BJ (cell line): ENCODE measurements at regions of chr16 and their contacts with region 1.

Region 1: DNA sequence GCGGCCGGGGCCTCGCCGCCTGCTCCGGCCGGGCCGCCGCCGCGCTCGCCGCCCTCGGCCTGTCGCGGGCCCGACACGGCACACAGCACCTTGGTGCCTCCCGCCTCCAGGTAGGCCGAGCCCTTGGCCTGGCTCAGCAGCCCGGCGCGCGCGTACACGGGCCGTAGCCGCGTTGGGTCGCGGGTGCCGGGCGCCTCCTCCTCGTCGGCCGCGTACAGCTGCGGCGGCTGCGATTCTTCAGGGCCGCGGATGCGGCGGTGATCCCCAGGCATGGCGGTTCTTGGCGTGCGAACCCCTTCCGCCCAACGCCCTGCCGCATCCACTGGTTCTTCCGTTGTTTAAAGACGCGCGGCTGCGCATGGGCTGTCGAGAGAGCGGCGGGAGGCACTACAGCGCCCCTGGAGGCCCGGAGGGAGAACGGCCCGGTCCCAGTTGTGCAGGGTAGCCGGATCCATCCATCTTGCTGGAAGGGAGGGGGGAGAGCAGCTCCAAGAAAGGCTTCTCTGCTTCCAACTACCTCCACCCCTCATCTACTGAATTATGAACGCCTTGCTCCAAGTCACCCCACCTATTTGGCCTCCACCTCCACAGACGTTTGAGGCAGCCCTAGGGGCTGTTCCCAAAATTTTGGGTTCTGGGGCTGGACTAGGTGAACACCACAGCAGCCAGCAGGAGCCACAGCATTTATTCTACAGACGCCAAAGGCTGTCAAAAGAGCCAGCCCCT is at the start of gene EXOSC6:
- DNase-seq: peak; percentile 39
- H3K4me3 ChIP-seq: peak within 1 kb of the TSS; percentile 53
- H3K27me3 ChIP-seq: no peaks in the 10 kb centered on the region
- CTCF ChIP-seq: peak; percentile 92
- polyA plus RNA-seq, gene EXOSC6: 10.6 and 14.9 TPM in 2 replicates

Region 2: GRCh38 chr16:70267516-70267915 is 15.7 kb after region 1 on chr16:
- CTCF ChIA-PET with region 1: interaction called, 46 read pairs
- POLR2A ChIA-PET with region 1: no interaction called
- DNase-seq: no peak
- H3K4me3 ChIP-seq: no peak overlapping the region
- H3K27me3 ChIP-seq: no peaks in the 10 kb centered on the region
- CTCF ChIP-seq: peak; percentile 59

Region 3: GRCh38 chr16:70407811-70408274 is 156.1 kb after region 1 on chr16:
- CTCF ChIA-PET with region 1: no interaction called
- POLR2A ChIA-PET with region 1: interaction called, 15 read pairs
- DNase-seq: no peak
- H3K4me3 ChIP-seq: no peak overlapping the region
- H3K27me3 ChIP-seq: no peaks in the 10 kb centered on the region
- CTCF ChIP-seq: no peak

Region 4: DNA sequence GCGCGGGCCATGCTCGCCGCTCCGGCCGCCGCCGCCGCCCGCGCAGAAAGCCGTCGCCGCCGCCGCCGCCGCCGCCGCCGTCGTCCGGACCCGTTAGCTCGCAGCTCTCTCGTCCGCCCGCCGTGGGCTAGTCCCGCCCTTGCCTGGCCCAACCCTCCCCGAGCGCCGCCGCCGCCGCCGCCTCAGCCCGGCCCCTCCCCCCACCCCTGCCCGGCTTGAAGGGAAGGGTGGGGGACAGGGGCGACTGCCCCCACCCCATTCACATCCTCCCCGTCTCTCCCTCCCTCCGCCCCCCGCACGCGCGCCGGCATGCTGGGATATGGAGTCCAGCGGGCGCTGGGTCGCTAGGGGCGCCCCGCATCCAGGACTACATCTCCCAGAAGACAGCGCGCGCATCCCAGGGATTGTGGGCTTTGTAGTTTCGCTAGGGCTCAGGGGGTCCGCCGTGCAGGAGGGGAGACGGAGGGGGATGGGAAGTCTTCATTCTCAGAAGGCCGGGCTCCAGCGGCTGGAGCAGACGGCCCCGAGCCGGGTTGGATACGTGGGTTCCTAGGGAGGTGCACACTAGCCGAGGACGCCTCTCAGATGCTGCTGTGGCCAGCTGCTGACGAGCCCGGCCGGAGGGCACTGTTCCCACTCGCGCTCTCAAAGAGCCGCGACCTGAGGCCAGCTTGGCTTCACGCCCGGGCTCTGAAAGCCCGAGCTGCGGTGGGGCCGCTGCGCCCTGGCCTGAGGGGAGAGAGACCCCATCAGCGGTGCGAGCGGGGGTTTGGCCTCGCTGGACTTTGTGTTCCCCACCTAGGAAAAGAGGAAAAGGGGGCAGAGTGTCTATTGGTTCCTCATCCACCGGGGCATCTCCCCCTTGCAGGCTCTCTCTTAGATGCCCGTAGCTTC is 187.4 kb after region 1 on chr16 and contains the start of gene ST3GAL2:
- CTCF ChIA-PET with region 1: no interaction called
- POLR2A ChIA-PET with region 1: no interaction called
- DNase-seq: peak; percentile 63
- H3K4me3 ChIP-seq: peak within 1 kb of the TSS; percentile 67
- H3K27me3 ChIP-seq: no peaks in the 10 kb centered on the region
- CTCF ChIP-seq: peak; percentile 32
- polyA plus RNA-seq, gene ST3GAL2: 20.3 and 24.7 TPM in 2 replicates